ENCODE measurements at regions of chr15 and their contacts with region 1.

Region 1: DNA sequence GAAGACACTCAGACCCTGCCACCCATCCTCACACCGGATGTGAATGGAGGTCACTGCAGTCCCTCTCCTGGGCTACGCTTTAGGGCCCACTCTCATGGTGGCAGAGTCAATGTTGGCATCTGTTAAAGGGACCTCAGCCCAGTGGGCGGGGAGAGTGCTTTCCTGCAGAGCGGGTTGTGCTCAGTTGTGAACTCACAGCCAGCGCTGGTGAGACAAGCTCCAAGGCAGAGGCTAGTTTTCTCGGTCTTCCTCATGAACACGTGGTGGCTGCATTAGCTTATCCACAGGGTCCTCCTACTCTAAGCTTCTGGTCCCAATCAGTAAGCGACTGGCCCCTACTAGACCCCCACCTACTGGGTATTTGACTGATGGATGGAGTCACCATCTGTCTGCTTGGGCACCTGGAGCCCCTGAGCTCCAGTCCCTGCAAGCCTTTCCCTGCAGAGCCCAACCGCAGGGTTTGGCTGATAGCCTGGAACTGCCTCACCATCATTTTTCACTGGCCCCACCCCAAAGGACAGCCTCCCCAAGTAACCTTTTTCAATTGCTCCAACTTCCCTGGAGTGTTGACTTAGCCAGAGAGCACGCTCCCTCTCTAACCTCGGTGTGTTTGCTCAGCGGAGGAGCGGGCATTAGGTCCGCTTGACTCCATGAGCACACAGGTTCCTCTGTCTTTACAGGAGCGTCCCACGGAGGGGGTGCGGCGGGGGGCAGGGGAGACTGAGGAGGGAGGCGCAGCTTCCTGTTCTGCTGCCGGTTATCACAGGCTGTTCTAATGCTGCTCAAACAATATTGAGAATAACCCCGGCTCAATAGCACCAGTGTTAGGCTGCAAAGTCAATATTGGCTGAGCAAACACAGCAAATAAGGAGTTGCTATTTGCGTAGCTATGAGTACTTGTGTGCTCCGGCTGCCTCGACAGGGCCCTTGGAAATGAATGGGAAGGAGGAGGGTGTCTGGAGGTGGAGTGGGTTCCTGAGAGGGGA is 141.7 kb downstream of the RPLP1 start:
- DNase-seq: peak in 1 of 2 donors; percentile 21
- ATAC-seq: peak in 1 of 2 donors; percentile 17
- H3K4me3 ChIP-seq: no peak overlapping the region
- H3K27ac ChIP-seq: peak overlapping the region; percentile 50 to 74 (median 56)
- H3K4me1 ChIP-seq: peaks cover 22 to 36% of the 10 kb centered on the region in 2 donors
- H3K27me3 ChIP-seq: no peaks in the 10 kb centered on the region
- CTCF ChIP-seq: no peak
- POLR2A ChIP-seq: no peak

Region 2: DNA sequence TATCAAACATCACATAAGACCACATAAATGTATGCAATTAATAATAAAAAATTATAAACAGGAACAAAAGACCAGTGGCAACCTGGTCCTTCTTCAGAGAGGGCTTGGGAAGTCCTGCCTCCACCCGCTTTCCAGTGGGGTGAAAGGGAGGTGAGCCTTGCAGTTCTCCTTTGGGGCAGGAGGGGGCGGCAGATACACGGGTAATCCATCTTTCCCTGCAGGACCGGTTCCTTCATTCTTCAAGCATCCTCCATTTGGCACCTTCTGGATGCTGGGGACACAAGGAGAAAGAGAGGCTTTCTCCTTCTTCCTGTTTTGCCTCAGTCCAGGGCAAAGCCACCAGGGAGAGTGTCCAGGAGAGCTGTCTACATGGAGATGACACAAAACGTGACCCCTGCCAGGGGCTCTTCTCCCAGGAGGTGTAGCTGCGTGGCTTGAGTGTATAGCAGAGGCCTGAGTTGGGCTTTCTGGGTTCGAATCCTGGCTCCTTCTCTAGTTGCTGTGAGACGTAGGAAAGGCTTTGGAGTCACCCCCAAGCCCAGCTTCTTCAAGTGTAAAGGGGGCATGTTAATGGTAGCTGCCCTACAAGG is 118.4 kb before region 1 on chr15:
- in situ Hi-C with region 1: no loop called
- intact Hi-C with region 1: loop called (anchors 10 kb)
- DNase-seq: peak; percentile 45 to 70
- ATAC-seq: peak; percentile 81 to 90
- H3K4me3 ChIP-seq: no peak overlapping the region
- H3K27ac ChIP-seq: no peak overlapping the region
- H3K4me1 ChIP-seq: no peaks in the 10 kb centered on the region
- H3K27me3 ChIP-seq: no peaks in the 10 kb centered on the region
- CTCF ChIP-seq: peak; percentile 79 to 93 (median 88)
- POLR2A ChIP-seq: no peak

Region 3: DNA sequence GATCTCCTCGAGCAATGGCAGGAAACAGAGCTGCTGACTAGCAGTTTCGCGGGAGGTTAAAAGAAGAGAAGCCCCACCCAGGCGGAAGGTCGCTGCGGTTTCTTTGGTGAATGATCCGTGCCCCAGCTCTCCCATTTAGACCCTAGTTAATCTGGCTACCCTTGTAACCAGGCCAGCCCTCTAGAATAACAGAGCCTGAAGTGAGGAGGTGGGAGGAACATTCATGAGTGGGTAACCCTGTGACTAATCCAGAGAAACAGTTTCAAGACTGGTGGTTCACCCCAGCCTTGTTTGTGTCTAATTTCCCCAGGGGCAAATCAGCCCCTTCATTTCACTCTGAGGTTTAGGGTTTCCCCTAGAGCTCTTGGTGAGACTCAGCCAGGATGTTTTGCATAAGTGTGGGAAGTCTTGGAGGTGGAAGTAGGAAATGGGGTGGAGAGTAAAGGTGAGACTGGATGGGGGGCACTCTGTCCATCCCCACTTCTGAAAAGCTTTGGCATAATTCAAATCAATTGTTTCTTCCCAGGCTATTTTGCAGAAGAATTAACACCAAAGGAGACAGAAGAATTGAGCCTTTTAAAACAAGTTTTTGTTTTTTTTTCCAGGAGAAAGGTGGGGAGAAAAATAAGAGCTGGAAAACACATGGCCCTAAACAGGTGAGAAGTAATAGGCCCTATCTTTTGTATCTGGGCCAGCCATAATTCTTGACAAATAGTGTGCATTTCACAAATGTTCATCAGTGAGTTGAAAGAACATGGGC is 161.5 kb after region 1 on chr15:
- in situ Hi-C with region 1: no loop called
- intact Hi-C with region 1: no loop called
- DNase-seq: no peak
- ATAC-seq: no peak
- H3K4me3 ChIP-seq: no peak overlapping the region
- H3K27ac ChIP-seq: no peak overlapping the region
- H3K4me1 ChIP-seq: no peaks in the 10 kb centered on the region
- H3K27me3 ChIP-seq: no peaks in the 10 kb centered on the region
- CTCF ChIP-seq: no peak
- POLR2A ChIP-seq: no peak

Region 4: DNA sequence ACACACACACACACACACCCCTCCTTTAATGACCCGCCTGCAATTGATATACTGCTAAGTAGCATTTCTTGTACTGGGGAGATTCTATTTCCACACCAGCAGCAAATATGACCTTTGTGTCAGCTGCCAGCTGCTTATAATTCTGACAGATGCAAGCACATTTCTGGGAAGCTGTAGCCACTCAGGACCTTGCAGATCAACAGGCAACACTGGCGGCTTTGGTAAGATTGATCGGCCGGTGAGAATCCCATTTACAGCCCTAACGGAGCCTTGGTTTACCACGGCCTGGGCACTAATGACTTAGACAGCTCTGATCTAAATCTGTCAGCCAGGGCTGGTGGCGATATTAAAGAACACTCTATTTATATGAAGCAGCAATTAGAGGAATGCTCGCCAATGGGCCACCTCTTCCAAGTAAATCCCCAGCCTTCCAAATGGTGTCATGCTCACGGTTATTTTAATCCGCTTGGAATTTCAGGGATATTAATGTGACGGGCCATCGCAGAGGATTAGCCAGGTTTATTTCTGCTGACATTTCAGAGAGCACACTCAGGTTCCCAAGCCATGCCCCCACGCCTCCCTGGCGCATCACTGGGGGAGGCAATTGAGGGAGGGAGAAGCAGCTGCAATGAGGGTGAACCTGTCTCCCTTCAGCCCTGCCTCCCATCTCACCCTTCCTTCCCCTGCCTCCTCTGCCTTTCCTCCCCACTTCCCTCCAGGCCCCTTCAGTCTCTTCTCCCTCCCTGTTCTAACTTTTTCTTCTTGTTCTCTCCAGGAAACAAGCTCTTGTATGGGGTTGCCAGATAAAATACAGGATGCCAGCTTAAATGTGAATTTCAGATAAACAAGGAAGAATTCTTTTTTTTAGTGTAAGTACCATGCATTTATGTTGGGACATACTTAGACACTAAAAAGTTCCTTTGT is 216.4 kb after region 1 on chr15:
- in situ Hi-C with region 1: no loop called
- intact Hi-C with region 1: loop called (anchors 2 kb)
- DNase-seq: peak; percentile 59 to 68
- ATAC-seq: peak; percentile 62 to 80
- H3K4me3 ChIP-seq: peak overlapping the region in 1 of 4 donors; percentile 6
- H3K27ac ChIP-seq: peak overlapping the region; percentile 80 to 87 (median 82)
- H3K4me1 ChIP-seq: peaks cover 16 to 19% of the 10 kb centered on the region in 2 donors
- H3K27me3 ChIP-seq: no peaks in the 10 kb centered on the region
- CTCF ChIP-seq: no peak
- POLR2A ChIP-seq: no peak

Measured in gastrocnemius medialis (tissue), 4 donors.